Body of pancreas (tissue), 4 donors: ENCODE measurements at regions of chr17 and their contacts with region 1.

Region 1: GRCh38 chr17:64063766-64064224 is 43.4 kb upstream of the ICAM2 start:
- DNase-seq: peak; percentile 82 to 87 (median 84)
- ATAC-seq: peak; percentile 83
- H3K4me3 ChIP-seq: no peak overlapping the region
- H3K27ac ChIP-seq: peak overlapping the region; percentile 50 to 84 (median 60)
- H3K4me1 ChIP-seq: peaks cover 47% of the 10 kb centered on the region
- H3K27me3 ChIP-seq: no peaks in the 10 kb centered on the region
- CTCF ChIP-seq: peak; percentile 39 to 81 (median 66)
- POLR2A ChIP-seq: peak in 2 of 3 donors; percentile 15 to 33

Region 2: GRCh38 chr17:63082273-63082993 is 981.4 kb before region 1 on chr17:
- intact Hi-C with region 1: no loop called
- DNase-seq: no peak
- ATAC-seq: no peak
- H3K4me3 ChIP-seq: no peak overlapping the region
- H3K27ac ChIP-seq: no peak overlapping the region
- H3K4me1 ChIP-seq: no peaks in the 10 kb centered on the region
- H3K27me3 ChIP-seq: no peaks in the 10 kb centered on the region
- CTCF ChIP-seq: peak; percentile 4 to 40 (median 36)
- POLR2A ChIP-seq: no peak

Region 3: DNA sequence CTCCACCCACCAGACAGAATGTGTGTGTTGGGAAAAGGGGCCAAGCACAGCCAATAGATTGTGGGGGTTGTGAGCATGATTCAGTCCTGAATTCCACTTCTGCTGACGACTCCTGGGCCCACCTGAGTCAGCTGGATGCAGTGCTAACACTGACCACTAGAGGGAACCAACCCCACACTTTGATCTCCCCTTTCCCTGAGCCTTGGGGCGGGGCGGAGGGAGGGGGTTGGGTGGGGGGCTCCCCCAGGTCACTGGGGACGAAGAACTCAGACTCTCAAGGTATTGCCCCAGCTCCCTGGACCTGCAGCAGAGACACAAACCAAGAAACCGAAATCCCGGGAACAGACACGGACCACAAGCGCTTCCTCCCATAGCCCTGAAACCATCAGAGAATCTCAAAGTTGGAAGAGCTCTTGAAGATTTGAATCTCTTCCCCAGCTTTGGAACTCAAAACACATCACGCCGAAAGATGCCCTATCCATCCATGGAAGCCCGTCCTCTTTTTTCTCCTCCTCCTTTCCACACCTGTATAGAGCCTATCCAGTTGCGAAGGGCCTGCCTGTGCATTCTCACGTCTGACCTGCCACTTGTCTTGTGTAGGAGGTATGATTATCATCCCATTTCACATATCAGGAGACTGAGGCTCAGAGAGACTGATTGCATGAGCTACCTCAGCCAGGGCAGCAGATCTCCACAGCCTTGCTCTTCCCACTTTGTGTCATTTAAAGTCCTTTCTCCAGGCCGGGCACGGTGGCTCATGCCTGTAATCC is 152.0 kb before region 1 on chr17:
- intact Hi-C with region 1: no loop called
- DNase-seq: peak; percentile 34 to 62 (median 45)
- ATAC-seq: no peak
- H3K4me3 ChIP-seq: no peak overlapping the region
- H3K27ac ChIP-seq: no peak overlapping the region
- H3K4me1 ChIP-seq: no peaks in the 10 kb centered on the region
- H3K27me3 ChIP-seq: no peaks in the 10 kb centered on the region
- CTCF ChIP-seq: peak; percentile 52 to 90 (median 66)
- POLR2A ChIP-seq: no peak

Region 4: DNA sequence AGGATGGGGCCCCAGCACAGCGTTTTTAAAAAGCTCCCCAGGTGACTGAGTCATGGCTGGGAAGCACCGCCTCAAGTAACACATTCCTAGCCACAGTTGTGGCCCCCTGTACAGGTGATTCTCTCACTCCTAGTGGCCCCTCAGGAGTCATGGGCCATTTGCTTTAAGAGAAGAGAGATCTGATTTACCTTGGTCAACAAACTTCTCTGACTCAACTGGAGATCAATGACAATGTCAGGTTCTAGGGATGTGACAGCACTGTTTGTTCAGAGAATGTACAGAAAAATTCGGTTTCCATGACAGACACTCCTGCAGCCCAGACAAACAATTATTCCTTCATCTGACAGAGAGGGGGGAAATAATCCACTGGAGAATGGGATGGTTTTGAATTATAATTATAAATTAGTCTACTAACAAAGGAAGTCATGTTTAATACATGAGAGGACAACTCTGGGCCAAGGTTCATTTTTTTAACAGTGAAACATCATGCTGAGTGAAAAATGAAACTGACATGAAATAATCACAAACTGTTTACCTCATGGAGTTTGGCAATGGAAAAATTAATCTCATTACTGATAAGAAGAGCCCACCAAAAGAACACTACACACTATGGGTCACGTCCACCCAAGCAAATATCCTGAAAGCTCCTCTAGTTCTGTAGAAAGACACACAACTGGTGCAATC is 56.5 kb after region 1 on chr17:
- intact Hi-C with region 1: loop called (anchors 5 kb)
- DNase-seq: no peak
- ATAC-seq: no peak
- H3K4me3 ChIP-seq: no peak overlapping the region
- H3K27ac ChIP-seq: peak overlapping the region in 3 of 4 donors; percentile 19 to 47 (median 37)
- H3K4me1 ChIP-seq: peaks cover 80% of the 10 kb centered on the region
- H3K27me3 ChIP-seq: no peaks in the 10 kb centered on the region
- CTCF ChIP-seq: no peak
- POLR2A ChIP-seq: no peak